AG04449 (cell line): ENCODE measurements at regions of chr1 and their contacts with region 1.

Region 1: DNA sequence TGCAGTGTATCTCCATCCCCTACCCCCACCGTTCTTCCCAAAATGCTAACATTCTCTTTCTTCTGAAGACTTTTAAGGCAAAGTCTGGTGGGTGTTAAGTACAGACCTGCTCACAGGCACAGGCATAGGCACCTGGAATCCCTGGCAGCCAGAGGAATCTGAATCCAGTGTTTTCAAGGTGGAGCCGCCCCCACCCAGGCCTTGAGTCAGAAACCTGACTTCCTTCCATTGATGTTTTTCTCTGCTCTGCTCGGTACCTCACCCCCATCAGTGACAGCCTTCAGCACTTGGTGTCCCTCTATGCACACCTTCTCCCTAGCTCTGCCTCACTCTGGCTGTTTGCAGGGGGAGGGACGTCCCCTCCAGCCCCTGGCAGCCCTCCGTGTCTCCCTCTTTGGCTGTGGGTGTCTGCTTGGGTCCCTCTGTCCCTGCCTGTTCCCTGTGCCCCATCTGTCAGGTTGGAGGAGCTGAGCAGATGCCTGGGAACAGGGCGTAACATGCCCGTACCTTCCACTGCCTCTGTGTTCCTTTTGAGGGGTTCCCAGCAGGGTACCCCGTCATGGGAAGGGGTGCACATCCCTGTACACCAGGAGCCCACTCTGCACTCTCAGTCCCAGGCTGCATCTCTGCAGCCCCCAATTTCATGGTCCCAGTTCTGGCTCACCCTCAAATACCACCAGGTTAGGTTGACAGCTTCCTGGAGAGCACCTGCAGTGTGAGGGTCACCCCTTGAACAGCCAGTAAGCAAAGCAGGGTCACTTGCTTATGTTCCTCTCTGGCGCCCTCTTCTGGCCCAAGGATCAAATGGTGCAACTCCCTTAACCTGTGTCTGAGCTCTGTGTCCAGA is 6.7 kb downstream of the NCDN start:
- DNase-seq: no peak
- H3K4me3 ChIP-seq: no peak overlapping the region
- CTCF ChIP-seq: peak; percentile 80

Region 2: GRCh38 chr1:35443768-35444518 is 120.3 kb before region 1 on chr1:
- CTCF ChIA-PET with region 1: interaction called, 326 read pairs
- POLR2A ChIA-PET with region 1: no interaction called
- DNase-seq: no peak
- H3K4me3 ChIP-seq: no peak overlapping the region
- CTCF ChIP-seq: peak; percentile 1

Region 3: GRCh38 chr1:35577071-35577998 is 13.1 kb after region 1 on chr1:
- CTCF ChIA-PET with region 1: interaction called, 21 read pairs
- POLR2A ChIA-PET with region 1: no interaction called
- DNase-seq: no peak
- H3K4me3 ChIP-seq: no peak overlapping the region
- CTCF ChIP-seq: no peak

Region 4: GRCh38 chr1:35646043-35646442 is 81.8 kb after region 1 on chr1:
- CTCF ChIA-PET with region 1: interaction called, 10 read pairs
- POLR2A ChIA-PET with region 1: no interaction called
- DNase-seq: no peak
- H3K4me3 ChIP-seq: no peak overlapping the region
- CTCF ChIP-seq: no peak

Region 5: DNA sequence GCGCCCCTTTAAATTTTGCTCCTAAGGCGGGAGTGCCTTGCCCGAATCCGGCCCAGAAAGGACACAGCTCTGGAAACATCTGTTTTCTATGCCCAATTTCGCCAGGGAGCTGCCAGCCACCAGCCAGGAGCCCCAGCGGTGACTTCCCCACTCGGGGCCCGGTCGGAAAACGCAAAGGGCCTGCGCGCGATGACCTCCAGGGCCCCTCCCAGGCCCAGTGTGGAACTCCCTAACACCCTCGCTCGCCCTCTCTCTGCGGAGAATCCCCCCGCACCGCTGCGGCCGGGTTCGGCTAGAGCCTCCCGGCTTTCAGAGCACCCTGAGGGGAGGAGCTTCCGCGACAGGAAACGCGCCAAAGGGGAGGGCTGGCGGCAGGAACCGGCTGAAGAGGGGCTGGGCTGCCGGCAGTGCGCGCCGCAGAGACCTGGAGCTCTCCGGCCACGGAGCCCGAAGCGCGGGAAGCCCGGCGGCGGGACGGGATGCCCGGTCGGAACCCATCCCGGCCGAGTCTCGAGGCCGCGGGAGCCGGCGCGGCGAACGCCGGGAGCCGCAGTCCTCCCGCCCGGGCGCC is 205.0 kb after region 1 on chr1:
- CTCF ChIA-PET with region 1: interaction called, 78 read pairs
- POLR2A ChIA-PET with region 1: interaction called, 4 read pairs
- DNase-seq: no peak
- H3K4me3 ChIP-seq: peak overlapping the region; percentile 81
- CTCF ChIP-seq: no peak